ENCODE measurements at regions of chr3 and their contacts with region 1.

Region 1: DNA sequence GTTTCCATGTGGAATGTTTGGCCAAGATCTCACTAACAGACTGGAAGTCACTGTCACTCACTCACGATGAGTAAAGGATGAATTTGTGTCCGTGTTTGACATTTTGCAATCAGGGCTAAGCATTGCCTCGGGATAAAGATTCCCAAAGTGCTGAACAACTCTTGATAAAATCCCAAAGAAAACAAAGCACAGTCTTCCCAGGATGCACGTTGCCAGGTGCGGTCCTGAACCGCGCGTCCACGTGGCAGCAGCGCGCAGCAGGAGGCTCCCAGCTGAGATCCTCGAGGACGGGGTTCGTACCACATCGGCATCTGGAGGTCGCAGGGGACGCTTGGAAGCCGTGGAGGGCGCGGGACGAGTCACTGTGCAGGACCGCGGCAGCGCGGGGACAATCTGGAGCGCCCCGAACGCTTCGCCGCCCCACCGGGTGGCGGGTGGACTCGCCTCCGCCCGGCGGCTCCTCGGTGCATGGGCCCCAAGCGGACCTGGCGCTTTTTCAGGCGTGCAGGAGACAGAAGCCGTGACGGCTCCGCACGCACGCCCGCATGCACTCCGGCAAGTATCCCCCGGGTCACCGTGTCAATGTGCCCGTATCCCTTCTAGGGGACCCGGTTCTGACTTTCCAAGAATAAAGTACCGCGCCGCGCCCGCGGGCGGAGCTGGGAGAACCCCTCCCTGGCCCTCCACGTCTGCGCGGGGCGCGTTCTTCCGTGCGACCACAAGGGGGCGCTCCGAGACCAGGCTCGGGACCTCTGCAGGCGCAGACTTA is 17.7 kb downstream of the CPN2 start:
- DNase-seq: peak; percentile 76
- ATAC-seq: peak; percentile 94
- H3K4me3 ChIP-seq: peak overlapping the region; percentile 42 to 49
- H3K27ac ChIP-seq: no peak overlapping the region; the same call in 1 of the 2 replicates
- H3K4me1 ChIP-seq: peaks cover 14 to 35% of the 10 kb centered on the region in 2 experiments; a peak in 3 of 4 replicates
- H3K27me3 ChIP-seq: no peaks in the 10 kb centered on the region
- CTCF ChIP-seq: peak in 2 of 3 experiments; percentile 89 to 97; a peak in 4 of 6 replicates
- POLR2A ChIP-seq: no peak
- RAD21 ChIP-seq: no peak

Region 2: GRCh38 chr3:194189243-194189791 is 144.1 kb before region 1 on chr3:
- CTCF ChIA-PET with region 1: no interaction called
- POLR2A ChIA-PET with region 1: no interaction called
- RAD21 ChIA-PET with region 1: no interaction called
- intact Hi-C with region 1: no loop called
- DNase-seq: no peak
- ATAC-seq: no peak
- H3K4me3 ChIP-seq: no peak overlapping the region
- H3K27ac ChIP-seq: no peak overlapping the region
- H3K4me1 ChIP-seq: no peaks in the 10 kb centered on the region
- H3K27me3 ChIP-seq: no peaks in the 10 kb centered on the region
- CTCF ChIP-seq: no peak
- POLR2A ChIP-seq: no peak
- RAD21 ChIP-seq: no peak

Region 3: DNA sequence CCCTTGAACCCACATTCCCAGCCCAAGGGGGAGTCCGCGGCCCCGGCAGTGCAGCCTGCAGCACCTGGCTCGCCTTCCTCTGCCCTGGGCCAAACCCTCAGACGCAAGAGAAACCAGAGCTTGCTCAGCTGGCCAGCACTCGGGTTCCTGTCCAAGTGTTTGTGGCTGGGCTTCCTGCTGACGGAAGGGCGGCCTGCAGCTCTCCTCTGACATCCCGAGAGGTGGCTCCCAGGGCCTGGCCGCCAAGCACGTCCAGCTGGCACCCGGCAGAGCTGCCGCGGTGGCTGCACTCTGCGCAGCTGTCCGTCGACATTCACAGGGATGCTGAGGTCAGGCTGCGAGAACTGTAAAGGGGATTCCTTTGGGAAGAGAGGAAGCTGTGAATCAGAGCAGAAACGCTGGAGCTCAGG is 67.9 kb before region 1 on chr3:
- CTCF ChIA-PET with region 1: no interaction called
- POLR2A ChIA-PET with region 1: no interaction called
- RAD21 ChIA-PET with region 1: no interaction called
- intact Hi-C with region 1: no loop called
- DNase-seq: no peak
- ATAC-seq: no peak
- H3K4me3 ChIP-seq: no peak overlapping the region
- H3K27ac ChIP-seq: no peak overlapping the region
- H3K4me1 ChIP-seq: peaks cover 28 to 34% of the 10 kb centered on the region in 2 experiments
- H3K27me3 ChIP-seq: no peaks in the 10 kb centered on the region
- CTCF ChIP-seq: no peak
- POLR2A ChIP-seq: no peak
- RAD21 ChIP-seq: no peak

Region 4: GRCh38 chr3:194294199-194294894 is 39.0 kb before region 1 on chr3:
- CTCF ChIA-PET with region 1: no interaction called
- POLR2A ChIA-PET with region 1: no interaction called
- RAD21 ChIA-PET with region 1: no interaction called
- intact Hi-C with region 1: no loop called
- DNase-seq: no peak
- ATAC-seq: no peak
- H3K4me3 ChIP-seq: no peak overlapping the region
- H3K27ac ChIP-seq: peak overlapping the region; percentile 18
- H3K4me1 ChIP-seq: peaks cover 62 to 71% of the 10 kb centered on the region in 2 experiments
- H3K27me3 ChIP-seq: no peaks in the 10 kb centered on the region
- CTCF ChIP-seq: no peak
- POLR2A ChIP-seq: no peak
- RAD21 ChIP-seq: no peak

Region 5: GRCh38 chr3:194344012-194344411 is 10.6 kb after region 1 on chr3:
- CTCF ChIA-PET with region 1: interaction called, 24 read pairs
- POLR2A ChIA-PET with region 1: interaction called, 4 read pairs
- RAD21 ChIA-PET with region 1: interaction called in 1 of 2 experiments, 3 read pairs
- intact Hi-C with region 1: no loop called
- DNase-seq: peak; percentile 28
- ATAC-seq: peak; percentile 88
- H3K4me3 ChIP-seq: no peak overlapping the region
- H3K27ac ChIP-seq: no peak overlapping the region
- H3K4me1 ChIP-seq: no peaks in the 10 kb centered on the region
- H3K27me3 ChIP-seq: no peaks in the 10 kb centered on the region
- CTCF ChIP-seq: peak; percentile 79 to 98 (median 97)
- POLR2A ChIP-seq: no peak
- RAD21 ChIP-seq: peak; percentile 85

Region 6: DNA sequence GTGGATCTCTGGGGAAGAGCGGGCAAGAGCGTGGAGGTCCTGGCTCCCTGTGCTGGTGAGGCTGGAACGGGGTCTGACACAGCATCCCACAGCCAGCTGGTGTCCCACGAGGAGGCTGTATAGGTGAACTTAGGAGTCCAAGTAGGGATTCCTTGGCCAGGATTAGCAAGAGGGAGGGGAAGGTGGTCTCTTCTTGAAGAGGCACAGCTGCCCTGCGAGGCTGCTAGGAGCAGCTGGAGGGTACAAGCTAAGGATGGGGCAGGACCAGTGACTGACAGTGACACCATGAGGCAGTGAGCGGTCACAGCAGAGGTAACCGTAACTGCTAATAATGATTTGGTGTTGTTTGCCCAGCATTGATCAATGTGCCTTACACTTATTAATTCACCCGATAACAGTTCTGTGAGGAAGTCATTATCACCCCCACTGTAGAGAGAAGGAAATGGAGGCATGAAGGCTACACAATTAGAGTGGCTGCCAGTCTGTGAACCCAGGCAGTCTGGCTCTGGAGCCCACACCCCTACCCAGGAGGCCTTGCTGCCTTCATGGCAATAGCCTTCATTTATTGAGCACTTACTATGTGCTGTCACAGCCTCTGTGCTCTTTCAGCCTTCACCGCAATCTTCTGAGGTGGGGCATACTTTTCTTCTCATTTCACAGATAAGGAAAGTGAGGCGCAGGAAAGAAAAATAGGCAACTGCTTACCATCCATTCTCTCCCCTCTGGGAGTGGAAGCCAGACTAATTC is 240.5 kb after region 1 on chr3:
- CTCF ChIA-PET with region 1: no interaction called
- POLR2A ChIA-PET with region 1: no interaction called
- RAD21 ChIA-PET with region 1: no interaction called
- intact Hi-C with region 1: loop called (anchors 5 kb)
- DNase-seq: no peak
- ATAC-seq: peak; percentile 69
- H3K4me3 ChIP-seq: no peak overlapping the region
- H3K27ac ChIP-seq: no peak overlapping the region
- H3K4me1 ChIP-seq: peaks cover 14 to 42% of the 10 kb centered on the region in 2 experiments
- H3K27me3 ChIP-seq: no peaks in the 10 kb centered on the region
- CTCF ChIP-seq: peak; percentile 48 to 68 (median 66)
- POLR2A ChIP-seq: no peak
- RAD21 ChIP-seq: peak; percentile 87

Region 7: GRCh38 chr3:194607592-194608389 is 274.4 kb after region 1 on chr3:
- CTCF ChIA-PET with region 1: no interaction called
- POLR2A ChIA-PET with region 1: no interaction called
- RAD21 ChIA-PET with region 1: no interaction called
- intact Hi-C with region 1: no loop called
- DNase-seq: no peak
- ATAC-seq: peak; percentile 38; the same call in 1 of the 2 replicates
- H3K4me3 ChIP-seq: no peak overlapping the region
- H3K27ac ChIP-seq: no peak overlapping the region
- H3K4me1 ChIP-seq: no peaks in the 10 kb centered on the region
- H3K27me3 ChIP-seq: no peaks in the 10 kb centered on the region
- CTCF ChIP-seq: no peak
- POLR2A ChIP-seq: no peak
- RAD21 ChIP-seq: no peak

Region 8: GRCh38 chr3:194671900-194672808 is 338.8 kb after region 1 on chr3 and contains the start of gene LSG1:
- CTCF ChIA-PET with region 1: interaction called, 8 read pairs
- POLR2A ChIA-PET with region 1: no interaction called
- RAD21 ChIA-PET with region 1: no interaction called
- intact Hi-C with region 1: loop called (anchors 5 kb)
- DNase-seq: peak; percentile 95
- ATAC-seq: peak; percentile 93
- H3K4me3 ChIP-seq: peak within 1 kb of the TSS; percentile 89 to 95
- H3K27ac ChIP-seq: peak within 1 kb of the TSS; percentile 43
- H3K4me1 ChIP-seq: peaks cover 7 to 19% of the 10 kb centered on the region in 2 experiments; a peak in 3 of 4 replicates
- H3K27me3 ChIP-seq: no peaks in the 10 kb centered on the region; the same call in 1 of the 2 replicates
- CTCF ChIP-seq: no peak
- POLR2A ChIP-seq: peak; percentile 26
- RAD21 ChIP-seq: no peak
- total RNA-seq, gene LSG1: 39.7 TPM

Region 9: GRCh38 chr3:195512798-195513345 is 1179.5 kb after region 1 on chr3:
- CTCF ChIA-PET with region 1: no interaction called
- POLR2A ChIA-PET with region 1: no interaction called
- RAD21 ChIA-PET with region 1: no interaction called
- intact Hi-C with region 1: loop called (anchors 10 kb)
- DNase-seq: no peak
- ATAC-seq: no peak
- H3K4me3 ChIP-seq: no peak overlapping the region
- H3K27ac ChIP-seq: no peak overlapping the region
- H3K4me1 ChIP-seq: no peaks in the 10 kb centered on the region
- H3K27me3 ChIP-seq: no peaks in the 10 kb centered on the region
- CTCF ChIP-seq: no peak
- POLR2A ChIP-seq: no peak
- RAD21 ChIP-seq: no peak